Dendritic cell treated with granulocyte-macrophage colony-stimulating factor and Interleukin-4, amounts not matched to agents 40 ng/mL and 50 ng/mL, for 4 days (primary cell): ENCODE measurements at regions of chr12 and their contacts with region 1.

Region 1: GRCh38 chr12:49288412-49288853 is 6.5 kb upstream of the PRPH start:
- H3K4me3 Mint-ChIP-seq: no peak overlapping the region
- H3K27ac Mint-ChIP-seq: no peak overlapping the region
- H3K4me1 Mint-ChIP-seq: peaks cover 4% of the 10 kb centered on the region
- H3K27me3 Mint-ChIP-seq: peaks cover 76% of the 10 kb centered on the region

Region 2: GRCh38 chr12:49336645-49337584 is 48.5 kb after region 1 on chr12 and contains the start of gene C1QL4:
- intact Hi-C with region 1: loop called (anchors 2 kb)
- H3K4me3 Mint-ChIP-seq: peak within 1 kb of the TSS; percentile 68
- H3K27ac Mint-ChIP-seq: no peak within 1 kb of the TSS
- H3K4me1 Mint-ChIP-seq: peaks cover 49% of the 10 kb centered on the region
- H3K27me3 Mint-ChIP-seq: peaks cover 98% of the 10 kb centered on the region

Region 3: GRCh38 chr12:49347384-49348237 is 59.2 kb after region 1 on chr12:
- intact Hi-C with region 1: loop called (anchors 2 kb)
- H3K4me3 Mint-ChIP-seq: peak overlapping the region; percentile 2
- H3K27ac Mint-ChIP-seq: peak overlapping the region; percentile 54
- H3K4me1 Mint-ChIP-seq: peaks cover 40% of the 10 kb centered on the region
- H3K27me3 Mint-ChIP-seq: peaks cover 91% of the 10 kb centered on the region

Region 4: DNA sequence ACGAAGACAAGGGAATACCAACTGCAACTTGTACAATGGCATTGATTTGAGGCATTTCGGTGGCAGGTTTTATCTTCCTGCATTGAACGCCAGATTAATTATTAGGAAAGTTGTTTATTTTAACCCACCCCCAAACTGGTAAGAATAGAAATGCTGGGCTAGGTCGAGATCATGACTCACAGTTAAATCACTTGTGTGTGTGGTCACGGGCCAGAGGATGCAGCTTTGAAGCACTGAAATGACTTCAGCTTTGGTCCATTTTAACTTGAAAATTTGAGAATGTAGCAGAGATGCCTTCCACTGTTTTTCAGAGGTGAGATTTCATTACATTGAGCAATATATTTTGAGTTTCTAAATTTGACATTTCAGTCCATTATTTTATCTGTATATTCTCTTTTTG is 226.8 kb after region 1 on chr12:
- intact Hi-C with region 1: loop called (anchors 5 kb)
- H3K4me3 Mint-ChIP-seq: no peak overlapping the region
- H3K27ac Mint-ChIP-seq: no peak overlapping the region
- H3K4me1 Mint-ChIP-seq: peaks cover 17% of the 10 kb centered on the region
- H3K27me3 Mint-ChIP-seq: no peaks in the 10 kb centered on the region